ENCODE measurements at regions of chr22 and their contacts with region 1.

Region 1: GRCh38 chr22:31122532-31123291 is at the start of gene INPP5J:
- DNase-seq: peak; percentile 88

Region 2: DNA sequence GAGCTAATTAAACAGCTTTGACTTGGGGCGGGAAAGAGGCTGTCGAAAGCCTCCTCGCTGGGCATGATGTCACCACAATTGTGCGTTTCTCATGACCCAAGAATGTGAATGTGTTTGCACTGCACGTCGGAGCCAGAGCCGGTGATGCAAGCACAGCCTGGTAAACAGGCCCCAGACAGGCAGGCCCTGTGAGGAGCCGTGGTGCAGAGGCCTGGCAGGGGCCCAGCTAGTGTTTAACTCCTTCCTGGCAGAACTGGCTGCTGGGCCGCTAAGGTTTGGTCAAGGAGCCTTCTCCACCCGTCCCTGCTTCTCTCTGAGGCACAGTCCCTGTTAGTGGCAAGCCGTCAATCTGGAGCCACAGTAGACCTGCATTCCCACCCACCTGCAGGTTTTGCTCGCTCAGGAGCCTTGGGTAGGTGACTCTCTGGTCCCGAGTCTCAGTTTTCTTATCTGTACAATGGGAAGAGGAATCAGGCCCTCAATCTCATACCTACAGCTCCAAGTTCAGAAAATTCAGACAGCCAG is 67.0 kb before region 1 on chr22:
- CTCF ChIA-PET with region 1: no interaction called
- POLR2A ChIA-PET with region 1: no interaction called
- DNase-seq: peak; percentile 73

Region 3: DNA sequence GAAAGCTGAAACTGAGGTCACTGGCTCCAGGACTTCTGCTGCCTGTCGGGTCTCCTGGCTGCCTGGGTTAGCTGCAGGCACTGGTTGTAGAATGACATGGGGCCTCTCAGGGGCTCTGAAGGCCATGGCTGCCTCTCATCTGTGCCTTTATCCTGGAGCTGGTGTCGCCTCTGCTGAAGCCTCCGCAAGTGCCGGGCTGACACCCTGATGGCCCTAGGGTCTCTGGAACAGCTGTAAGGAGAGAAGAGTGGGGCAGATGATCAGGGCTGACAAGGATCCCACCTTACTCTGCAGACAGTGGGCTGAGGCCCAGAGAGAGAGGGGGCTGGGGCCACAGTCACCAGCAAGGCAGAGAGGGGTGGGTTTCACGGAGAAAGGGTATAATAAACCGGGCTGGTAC is 13.0 kb after region 1 on chr22:
- CTCF ChIA-PET with region 1: no interaction called
- POLR2A ChIA-PET with region 1: interaction called, 13 read pairs
- DNase-seq: no peak